CD4-positive, alpha-beta T cell (primary cell): ENCODE measurements at regions of chr9 and their contacts with region 1.

Region 1: DNA sequence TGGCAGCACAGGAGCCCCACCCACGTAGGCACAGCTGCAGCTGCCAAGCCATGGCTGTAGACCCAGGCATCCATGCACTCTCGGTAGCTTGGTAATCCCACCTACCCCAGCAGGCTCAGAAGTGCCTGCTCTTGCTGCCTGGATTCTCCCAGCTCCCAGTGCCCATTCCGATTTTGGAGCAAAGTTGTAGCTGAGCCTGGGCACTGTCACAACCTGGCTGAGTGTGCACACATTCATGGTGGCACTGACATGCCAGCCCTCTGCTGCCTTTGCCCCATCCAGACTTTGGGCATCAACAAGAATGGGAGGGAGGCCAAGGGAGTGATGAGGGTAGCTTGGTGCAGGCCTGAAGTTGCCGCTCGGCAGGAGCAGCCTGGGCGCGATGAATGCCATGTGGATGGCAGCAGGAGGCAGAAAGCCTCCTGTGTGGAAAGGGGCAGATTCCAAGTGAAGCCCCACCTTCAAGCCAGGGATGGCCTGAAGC is 936.6 kb upstream of the PTPRD start:
- DNase-seq: no peak
- ATAC-seq: no peak
- H3K4me3 ChIP-seq: no peak overlapping the region
- H3K4me3 Mint-ChIP-seq: no peak overlapping the region
- H3K27ac ChIP-seq: no peak overlapping the region
- H3K27ac Mint-ChIP-seq: no peak overlapping the region
- H3K4me1 ChIP-seq: no peaks in the 10 kb centered on the region
- H3K4me1 Mint-ChIP-seq: no peaks in the 10 kb centered on the region
- H3K27me3 ChIP-seq: no peaks in the 10 kb centered on the region
- H3K27me3 Mint-ChIP-seq: no peaks in the 10 kb centered on the region
- CTCF ChIP-seq: no peak

Region 2: DNA sequence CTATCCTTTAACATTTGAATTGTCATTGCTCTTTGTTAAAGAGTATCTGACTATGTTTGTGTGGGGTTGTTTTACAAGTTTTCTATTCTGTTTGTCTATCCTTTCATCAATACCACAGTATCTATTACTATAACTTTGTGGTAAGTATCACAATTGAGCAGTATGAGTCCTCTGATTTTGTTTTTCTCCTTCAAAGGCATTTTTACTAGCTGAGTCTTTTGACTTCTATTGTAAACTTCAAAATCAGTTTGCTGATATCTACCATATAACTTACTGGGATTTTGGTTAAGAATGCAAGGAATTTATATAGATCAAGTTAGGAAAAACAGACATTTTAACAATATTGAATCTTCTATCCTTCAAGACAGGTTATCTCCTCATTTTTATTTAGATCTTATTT is 146.7 kb before region 1 on chr9:
- CTCF ChIA-PET with region 1: no interaction called
- POLR2A ChIA-PET with region 1: no interaction called
- intact Hi-C with region 1: no loop called
- DNase-seq: no peak
- ATAC-seq: no peak
- H3K4me3 ChIP-seq: no peak overlapping the region
- H3K4me3 Mint-ChIP-seq: no peak overlapping the region
- H3K27ac ChIP-seq: no peak overlapping the region
- H3K27ac Mint-ChIP-seq: no peak overlapping the region
- H3K4me1 ChIP-seq: no peaks in the 10 kb centered on the region
- H3K4me1 Mint-ChIP-seq: no peaks in the 10 kb centered on the region
- H3K27me3 ChIP-seq: no peaks in the 10 kb centered on the region
- H3K27me3 Mint-ChIP-seq: no peaks in the 10 kb centered on the region
- CTCF ChIP-seq: no peak

Region 3: GRCh38 chr9:11500780-11501179 is 48.6 kb before region 1 on chr9:
- CTCF ChIA-PET with region 1: no interaction called
- POLR2A ChIA-PET with region 1: no interaction called
- intact Hi-C with region 1: loop called in 1 of 2 experiments (anchors 10 kb)
- DNase-seq: no peak
- ATAC-seq: no peak
- H3K4me3 ChIP-seq: no peak overlapping the region
- H3K4me3 Mint-ChIP-seq: no peak overlapping the region
- H3K27ac ChIP-seq: no peak overlapping the region
- H3K27ac Mint-ChIP-seq: no peak overlapping the region
- H3K4me1 ChIP-seq: no peaks in the 10 kb centered on the region
- H3K4me1 Mint-ChIP-seq: no peaks in the 10 kb centered on the region
- H3K27me3 ChIP-seq: no peaks in the 10 kb centered on the region
- H3K27me3 Mint-ChIP-seq: no peaks in the 10 kb centered on the region
- CTCF ChIP-seq: no peak

Region 4: DNA sequence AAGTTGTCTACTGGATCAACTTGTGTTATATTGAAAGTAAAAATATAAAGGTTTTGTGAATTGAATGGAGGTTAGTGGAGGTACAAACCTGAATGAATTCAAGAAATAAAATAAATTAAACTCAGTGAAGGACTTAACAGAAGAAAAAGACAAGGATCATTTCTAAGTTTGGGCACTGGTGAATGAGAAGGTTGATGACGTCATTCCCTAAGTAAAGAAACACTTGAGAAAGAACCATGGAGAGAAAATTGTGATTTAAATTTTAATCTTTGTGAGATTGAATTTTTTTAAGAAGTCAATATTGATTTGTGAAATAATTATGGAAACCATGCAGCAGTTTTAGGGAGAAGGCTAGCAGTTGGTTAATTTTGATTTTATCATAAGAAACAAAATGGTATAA is 243.5 kb after region 1 on chr9:
- CTCF ChIA-PET with region 1: no interaction called
- POLR2A ChIA-PET with region 1: no interaction called
- intact Hi-C with region 1: no loop called
- DNase-seq: no peak
- ATAC-seq: no peak
- H3K4me3 ChIP-seq: no peak overlapping the region
- H3K4me3 Mint-ChIP-seq: no peak overlapping the region
- H3K27ac ChIP-seq: no peak overlapping the region
- H3K27ac Mint-ChIP-seq: no peak overlapping the region
- H3K4me1 ChIP-seq: no peaks in the 10 kb centered on the region
- H3K4me1 Mint-ChIP-seq: no peaks in the 10 kb centered on the region
- H3K27me3 ChIP-seq: no peaks in the 10 kb centered on the region
- H3K27me3 Mint-ChIP-seq: no peaks in the 10 kb centered on the region
- CTCF ChIP-seq: no peak